Astrocyte of the cerebellum (primary cell): ENCODE measurements at regions of chr14 and their contacts with region 1.

Region 1: DNA sequence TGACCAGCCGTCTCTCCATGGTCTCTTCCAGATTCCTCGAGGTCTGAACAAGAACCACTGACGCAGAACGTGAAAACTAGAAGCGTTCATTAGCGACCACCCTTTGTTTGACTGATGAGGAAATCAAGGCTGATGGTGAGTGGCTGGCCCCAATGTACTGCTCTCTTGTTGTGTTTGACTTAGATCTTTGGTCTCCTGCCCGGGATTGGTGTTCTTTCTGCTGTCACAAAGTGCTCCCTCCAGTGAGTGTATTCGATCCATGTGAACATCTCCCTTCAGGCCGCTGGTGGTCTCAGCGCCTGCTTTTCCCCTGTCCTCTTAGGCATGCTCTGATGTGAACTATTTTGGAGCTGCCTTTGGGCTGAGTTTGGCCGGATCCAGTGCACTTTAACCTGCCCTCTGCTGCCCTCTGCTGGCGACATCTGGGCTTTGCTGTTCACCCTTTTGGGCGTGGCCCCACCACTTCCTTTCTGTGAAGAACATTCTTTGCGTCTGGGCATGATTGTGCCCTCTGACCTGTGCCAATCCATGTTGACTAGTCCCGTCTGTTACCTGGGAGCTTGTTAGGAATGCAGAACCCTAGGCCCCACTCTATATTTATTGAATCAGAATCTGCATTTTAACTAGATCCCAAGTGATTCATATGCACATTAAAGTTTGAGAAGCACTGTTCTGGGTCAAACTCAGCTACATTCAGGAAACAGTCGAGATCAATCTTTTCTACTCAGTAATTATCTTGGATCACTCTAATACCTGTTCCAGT is 279.2 kb downstream of the TTC6 start:
- DNase-seq: peak; percentile 46
- H3K4me3 ChIP-seq: no peak overlapping the region
- CTCF ChIP-seq: peak; percentile 85

Region 2: GRCh38 chr14:37709419-37710195 is 165.0 kb before region 1 on chr14:
- in situ Hi-C with region 1: loop called (anchors 25 kb)
- DNase-seq: peak; percentile 22
- H3K4me3 ChIP-seq: no peak overlapping the region
- CTCF ChIP-seq: peak; percentile 27

Region 3: GRCh38 chr14:37834275-37834674 is 40.3 kb before region 1 on chr14:
- in situ Hi-C with region 1: no loop called
- DNase-seq: no peak
- H3K4me3 ChIP-seq: no peak overlapping the region
- CTCF ChIP-seq: no peak